ENCODE measurements at regions of chr19 and their contacts with region 1.

Region 1: DNA sequence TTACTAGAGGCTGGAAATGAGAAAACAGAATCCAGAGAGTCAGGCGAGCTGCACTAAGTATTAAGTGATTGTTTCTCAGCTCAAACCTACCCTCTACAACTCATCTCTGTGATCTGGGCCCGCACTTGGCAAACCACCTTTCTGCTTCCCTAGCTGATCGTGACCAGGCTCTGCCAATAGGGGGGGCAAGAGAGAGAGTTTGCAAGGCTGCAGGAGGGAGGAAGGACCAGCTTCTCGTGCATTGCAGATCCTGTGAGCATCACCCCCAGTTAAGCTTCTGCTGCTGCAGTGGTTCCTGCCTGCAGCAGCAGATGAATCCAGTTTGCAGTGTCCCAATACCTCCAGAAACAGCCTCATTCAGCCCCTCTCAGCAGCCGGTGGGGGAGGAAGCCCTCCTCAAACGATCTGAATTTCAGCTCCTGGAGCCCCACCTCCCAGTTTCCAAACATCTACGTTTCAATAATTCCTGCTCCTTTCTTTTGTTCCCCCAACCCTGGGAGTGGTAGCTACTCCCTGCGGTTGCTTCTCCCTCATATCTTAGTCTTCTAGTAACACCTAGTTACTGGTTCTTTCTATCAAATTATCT is 20.0 kb downstream of the XRCC1 start:
- DNase-seq: peak; percentile 81 to 85 (median 82)
- H3K4me3 ChIP-seq: no peak overlapping the region
- H3K4me3 Mint-ChIP-seq: peak overlapping the region in 2 of 8 donors; percentile 31 to 52
- H3K27ac ChIP-seq: no peak overlapping the region
- H3K27ac Mint-ChIP-seq: peak overlapping the region; percentile 6 to 85 (median 77)
- H3K4me1 ChIP-seq: peaks cover 7% of the 10 kb centered on the region
- H3K4me1 Mint-ChIP-seq: peaks cover 10 to 19% (median 12%) of the 10 kb centered on the region in 4 donors
- H3K27me3 ChIP-seq: no peaks in the 10 kb centered on the region
- H3K27me3 Mint-ChIP-seq: no peaks in the 10 kb centered on the region

Region 2: GRCh38 chr19:43532962-43533545 is 22.2 kb before region 1 on chr19 and contains the start of gene ZNF575:
- CTCF ChIA-PET with region 1: interaction called, 64 read pairs
- POLR2A ChIA-PET with region 1: interaction called, 16 read pairs
- intact Hi-C with region 1: loop called (anchors 2 kb)
- DNase-seq: peak; percentile 82 to 88 (median 84)
- H3K4me3 ChIP-seq: peak within 1 kb of the TSS; percentile 69 to 88
- H3K4me3 Mint-ChIP-seq: peak within 1 kb of the TSS; percentile 91 to 99 (median 98)
- H3K27ac ChIP-seq: peak within 1 kb of the TSS; percentile 53
- H3K27ac Mint-ChIP-seq: peak within 1 kb of the TSS; percentile 95 to 99 (median 98)
- H3K4me1 ChIP-seq: peaks cover 17% of the 10 kb centered on the region
- H3K4me1 Mint-ChIP-seq: peaks cover 10 to 22% (median 15%) of the 10 kb centered on the region in 4 donors
- H3K27me3 ChIP-seq: no peaks in the 10 kb centered on the region
- H3K27me3 Mint-ChIP-seq: no peaks in the 10 kb centered on the region
- total RNA-seq, gene ZNF575: 11.0 to 11.8 TPM

Region 3: GRCh38 chr19:43570174-43570791 is 15.0 kb after region 1 on chr19:
- CTCF ChIA-PET with region 1: interaction called, 31 read pairs
- POLR2A ChIA-PET with region 1: interaction called, 29 read pairs
- intact Hi-C with region 1: no loop called
- DNase-seq: no peak
- H3K4me3 ChIP-seq: no peak overlapping the region
- H3K4me3 Mint-ChIP-seq: no peak overlapping the region
- H3K27ac ChIP-seq: no peak overlapping the region
- H3K27ac Mint-ChIP-seq: peak overlapping the region in 6 of 7 donors; percentile 6 to 83 (median 53)
- H3K4me1 ChIP-seq: peaks cover 16% of the 10 kb centered on the region
- H3K4me1 Mint-ChIP-seq: peaks cover 21 to 56% (median 38%) of the 10 kb centered on the region in 4 donors
- H3K27me3 ChIP-seq: no peaks in the 10 kb centered on the region
- H3K27me3 Mint-ChIP-seq: no peaks in the 10 kb centered on the region

Region 4: DNA sequence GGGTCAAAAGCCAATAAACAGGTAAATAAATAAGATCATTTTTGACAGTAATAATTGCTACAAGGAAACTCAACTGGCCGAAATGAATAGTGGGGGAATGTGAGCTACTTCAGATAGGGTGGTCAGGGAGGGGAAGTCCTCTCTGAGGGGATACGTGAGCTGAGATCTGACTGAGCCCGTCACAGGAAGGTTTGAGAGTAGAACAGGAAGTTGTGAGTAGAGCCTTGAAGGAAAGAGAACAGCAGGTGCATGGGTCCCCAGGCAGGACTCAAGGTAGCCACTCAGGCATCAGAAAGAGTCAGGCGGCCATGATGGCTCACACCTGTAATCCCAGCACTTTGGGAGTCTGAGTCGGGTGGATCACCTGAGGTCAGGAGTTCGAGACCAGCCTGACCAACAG is 34.4 kb after region 1 on chr19:
- CTCF ChIA-PET with region 1: interaction called, 245 read pairs
- POLR2A ChIA-PET with region 1: interaction called, 61 read pairs
- intact Hi-C with region 1: no loop called
- DNase-seq: no peak
- H3K4me3 ChIP-seq: no peak overlapping the region
- H3K4me3 Mint-ChIP-seq: no peak overlapping the region
- H3K27ac ChIP-seq: no peak overlapping the region
- H3K27ac Mint-ChIP-seq: peak overlapping the region in 6 of 7 donors; percentile 11 to 75 (median 58)
- H3K4me1 ChIP-seq: peaks cover 8% of the 10 kb centered on the region
- H3K4me1 Mint-ChIP-seq: peaks cover 9 to 28% (median 16%) of the 10 kb centered on the region in 4 donors
- H3K27me3 ChIP-seq: no peaks in the 10 kb centered on the region
- H3K27me3 Mint-ChIP-seq: no peaks in the 10 kb centered on the region

Measured in CD4-positive, alpha-beta memory T cell (primary cell).